HepG2 (cell line): ENCODE measurements at regions of chr11 and their contacts with region 1.

Region 1: GRCh38 chr11:110296226-110297075 is at the start of gene RDX:
- DNase-seq: peak; percentile 52
- ATAC-seq: peak; percentile 76
- H3K4me3 ChIP-seq: peak within 1 kb of the TSS; percentile 79 to 92 (median 91)
- H3K27ac ChIP-seq: peak within 1 kb of the TSS; percentile 79
- H3K4me1 ChIP-seq: peaks cover 60% of the 10 kb centered on the region
- H3K27me3 ChIP-seq: no peaks in the 10 kb centered on the region
- CTCF ChIP-seq: no peak
- EP300 ChIP-seq: no peak
- POLR2A ChIP-seq: peak; percentile 50 to 75; a peak in 3 of 4 replicates
- RAD21 ChIP-seq: no peak
- total RNA-seq, gene RDX: 63.1 and 93.4 TPM in 2 replicates

Region 2: DNA sequence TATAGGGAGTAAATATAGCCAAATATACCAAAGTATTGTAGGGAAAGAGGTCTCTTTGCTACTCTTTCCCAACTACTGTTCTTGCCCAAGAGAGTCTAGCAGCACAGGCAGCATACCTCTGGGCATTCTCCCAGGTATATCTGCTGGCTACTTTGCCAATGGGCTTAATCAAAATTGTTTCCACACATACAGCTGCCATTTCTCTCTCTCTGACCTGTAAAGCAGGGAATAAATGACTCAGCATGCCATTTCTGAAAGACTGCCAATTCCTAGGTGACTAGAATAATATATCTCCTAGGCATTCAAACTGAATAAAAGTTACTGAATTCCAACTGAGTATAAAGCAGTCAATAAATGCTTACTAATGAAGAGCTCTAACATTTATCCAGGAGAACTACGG is 44.6 kb before region 1 on chr11:
- CTCF ChIA-PET with region 1: no interaction called
- POLR2A ChIA-PET with region 1: no interaction called
- in situ Hi-C with region 1: no loop called
- intact Hi-C with region 1: loop called (anchors 5 kb)
- DNase-seq: no peak
- ATAC-seq: no peak
- H3K4me3 ChIP-seq: no peak overlapping the region
- H3K27ac ChIP-seq: no peak overlapping the region
- H3K4me1 ChIP-seq: no peaks in the 10 kb centered on the region
- H3K27me3 ChIP-seq: no peaks in the 10 kb centered on the region
- CTCF ChIP-seq: no peak
- EP300 ChIP-seq: no peak
- POLR2A ChIP-seq: no peak
- RAD21 ChIP-seq: no peak

Region 3: DNA sequence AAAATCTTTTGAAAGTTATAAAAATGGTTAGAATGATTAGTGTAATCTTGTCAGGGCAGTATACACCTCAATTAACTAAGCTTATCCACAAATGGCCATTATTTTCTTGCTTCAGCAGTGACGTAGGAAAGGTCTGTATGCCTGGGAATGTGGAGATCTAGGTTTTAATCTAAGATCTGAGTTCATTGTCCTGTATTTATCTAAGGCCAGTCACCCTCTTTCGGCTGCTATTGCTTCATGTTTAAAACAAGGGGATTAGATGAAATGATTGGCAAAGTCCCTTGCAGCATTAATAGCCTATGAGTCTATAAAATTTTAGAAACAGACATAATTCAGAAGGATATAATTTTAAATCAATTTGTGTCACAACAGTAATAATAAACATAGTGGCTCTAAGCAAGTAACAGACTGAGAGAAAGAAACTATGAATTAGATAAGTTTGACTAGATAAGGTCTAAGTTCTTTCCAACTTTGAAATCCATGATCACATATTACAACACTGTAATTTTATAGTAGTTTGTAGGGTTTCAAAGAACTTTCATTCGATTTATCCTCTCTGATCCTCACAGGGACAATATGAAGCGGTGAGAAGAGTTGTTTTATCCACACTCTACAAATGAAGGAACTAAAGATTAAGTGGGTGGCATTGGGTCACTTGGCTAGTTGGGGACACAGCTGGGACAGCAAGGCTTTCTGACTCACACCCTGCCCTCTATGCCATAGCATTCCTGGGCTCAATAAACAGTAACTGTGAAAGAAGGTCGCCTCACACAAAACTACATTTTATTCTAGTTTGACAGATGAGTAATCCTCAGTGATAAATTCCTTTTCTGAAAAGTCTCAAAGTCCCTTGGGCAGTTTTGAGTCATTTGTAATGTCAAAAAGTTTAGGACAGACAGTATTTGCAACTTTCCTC is 60.6 kb after region 1 on chr11:
- CTCF ChIA-PET with region 1: no interaction called
- POLR2A ChIA-PET with region 1: no interaction called
- in situ Hi-C with region 1: no loop called
- intact Hi-C with region 1: loop called (anchors 2 kb)
- DNase-seq: peak; percentile 84
- ATAC-seq: peak; percentile 91
- H3K4me3 ChIP-seq: no peak overlapping the region; a peak in 1 of 6 replicates
- H3K27ac ChIP-seq: peak overlapping the region; percentile 42
- H3K4me1 ChIP-seq: peaks cover 30% of the 10 kb centered on the region
- H3K27me3 ChIP-seq: no peaks in the 10 kb centered on the region; a peak in 1 of 5 replicates
- CTCF ChIP-seq: no peak
- EP300 ChIP-seq: peak in 1 of 2 experiments; percentile 6; a peak in 1 of 4 replicates
- POLR2A ChIP-seq: no peak
- RAD21 ChIP-seq: no peak

Region 4: GRCh38 chr11:110429731-110430266 is 133.3 kb after region 1 on chr11 and contains the start of gene FDX1:
- CTCF ChIA-PET with region 1: no interaction called
- POLR2A ChIA-PET with region 1: interaction called, 3 read pairs
- in situ Hi-C with region 1: no loop called
- intact Hi-C with region 1: loop called (anchors 5 kb)
- DNase-seq: peak; percentile 71
- ATAC-seq: peak; percentile 93
- H3K4me3 ChIP-seq: peak within 1 kb of the TSS; percentile 61 to 96 (median 91)
- H3K27ac ChIP-seq: peak within 1 kb of the TSS; percentile 80
- H3K4me1 ChIP-seq: peaks cover 26% of the 10 kb centered on the region
- H3K27me3 ChIP-seq: no peaks in the 10 kb centered on the region; a peak in 1 of 5 replicates
- CTCF ChIP-seq: peak; percentile 61; the same call in 1 of the 2 replicates
- EP300 ChIP-seq: no peak
- POLR2A ChIP-seq: peak; percentile 30 to 58; a peak in 3 of 4 replicates
- RAD21 ChIP-seq: peak; percentile 61; the same call in 1 of the 2 replicates
- total RNA-seq, gene FDX1: 13.1 and 14.5 TPM in 2 replicates